ENCODE measurements at regions of chr4 and their contacts with region 1.

Region 1: DNA sequence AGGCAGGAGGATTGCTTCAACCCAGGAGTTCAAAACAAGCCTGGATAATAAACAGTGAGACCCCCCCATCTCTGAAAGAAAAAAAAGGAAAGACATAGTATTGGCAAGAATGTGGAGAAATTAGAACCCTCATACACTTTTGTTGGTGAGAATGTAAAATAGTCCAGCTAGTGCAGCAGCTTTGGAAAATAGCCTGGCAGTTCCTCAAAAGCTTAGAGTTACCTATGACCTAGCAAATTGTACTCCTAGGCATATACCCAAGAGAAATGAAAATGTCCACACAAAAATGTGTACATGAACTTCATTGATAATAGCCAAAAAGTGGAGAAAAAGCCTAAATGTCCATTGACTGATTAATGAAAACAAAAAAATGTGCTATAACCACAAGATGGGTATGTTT is 21.3 kb downstream of the THAP9 start:
- DNase-seq: no peak
- H3K4me3 ChIP-seq: no peak overlapping the region
- H3K27ac ChIP-seq: no peak overlapping the region
- H3K4me1 ChIP-seq: no peaks in the 10 kb centered on the region
- H3K27me3 ChIP-seq: no peaks in the 10 kb centered on the region
- CTCF ChIP-seq: no peak
- POLR2A ChIP-seq: no peak

Region 2: DNA sequence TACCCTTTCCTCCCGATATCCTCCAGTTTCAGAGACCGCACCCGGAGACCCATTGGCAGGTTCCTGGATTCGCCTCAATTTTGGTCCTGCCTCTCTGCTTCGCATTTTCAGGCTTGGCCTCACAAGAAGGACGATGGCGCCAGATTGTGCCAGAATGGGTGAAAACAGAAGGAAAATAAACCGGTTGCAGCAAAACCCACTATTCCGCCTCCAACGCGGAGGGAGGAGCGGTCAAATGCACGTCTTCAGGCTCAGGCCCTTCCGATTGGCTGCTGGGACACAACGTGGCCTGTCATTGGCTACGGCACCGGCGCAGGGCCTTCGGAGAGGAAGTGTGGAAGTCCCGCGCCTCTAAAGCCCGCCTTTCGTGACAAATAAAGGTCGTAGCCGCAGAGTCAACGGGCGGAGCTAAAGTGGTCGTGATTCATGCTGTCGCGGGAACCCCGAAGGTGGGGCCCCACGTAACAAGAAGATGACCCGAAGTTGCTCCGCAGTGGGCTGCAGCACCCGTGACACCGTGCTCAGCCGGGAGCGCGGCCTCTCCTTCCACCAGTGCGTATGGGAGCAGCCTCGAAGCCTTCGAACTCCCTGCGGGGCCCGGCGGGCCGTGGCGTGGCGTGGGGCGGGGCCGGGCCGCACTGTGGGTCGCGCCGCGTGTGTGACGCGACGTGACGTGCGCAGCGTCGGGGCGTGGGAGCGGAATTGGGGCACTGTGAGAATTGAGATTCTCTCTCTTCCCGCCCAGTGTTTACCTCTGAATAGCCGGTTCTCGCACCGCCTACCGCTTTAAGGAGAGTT is 21.3 kb before region 1 on chr4 and contains the start of gene THAP9:
- intact Hi-C with region 1: loop called (anchors 2 kb)
- DNase-seq: peak; percentile 99 to 100
- H3K4me3 ChIP-seq: peak within 1 kb of the TSS; percentile 60 to 76
- H3K27ac ChIP-seq: peak within 1 kb of the TSS; percentile 98
- H3K4me1 ChIP-seq: peaks cover 45% of the 10 kb centered on the region
- H3K27me3 ChIP-seq: no peaks in the 10 kb centered on the region
- CTCF ChIP-seq: no peak
- POLR2A ChIP-seq: peak; percentile 64 to 85
- total RNA-seq, gene THAP9: 4.2 TPM

Region 3: DNA sequence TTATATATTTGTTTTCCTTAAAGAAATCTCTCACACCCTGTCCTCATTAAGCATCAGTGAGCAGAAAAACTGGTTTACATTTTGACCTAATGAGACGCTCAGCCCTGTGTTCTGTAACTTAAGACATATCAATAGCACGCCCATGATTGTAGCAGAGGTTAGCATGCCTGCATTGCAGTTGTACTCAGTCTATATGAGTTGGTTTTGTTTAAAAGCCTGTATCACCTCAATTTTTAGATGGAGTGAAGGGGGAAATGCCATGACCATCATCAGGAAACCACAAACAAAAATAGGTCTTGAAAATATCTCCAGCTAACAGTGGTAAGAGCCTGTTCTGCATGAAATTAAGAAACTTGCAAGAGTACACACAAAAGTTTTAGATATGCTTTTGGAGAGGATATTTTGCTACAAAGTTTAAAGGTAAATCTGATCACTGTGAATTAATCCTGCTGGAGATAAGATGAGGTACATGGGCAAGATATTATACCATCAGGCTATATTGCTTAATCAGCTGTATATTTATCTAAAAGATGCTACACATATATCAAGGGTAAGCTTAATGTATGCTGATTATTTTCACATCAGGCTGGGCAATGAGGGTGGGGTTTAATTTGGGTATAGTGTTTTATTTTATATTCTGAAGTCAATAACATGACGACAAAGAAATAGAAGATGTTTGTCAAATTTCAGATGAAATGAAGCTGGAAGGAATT is 375.9 kb after region 1 on chr4:
- intact Hi-C with region 1: no loop called
- DNase-seq: no peak
- H3K4me3 ChIP-seq: no peak overlapping the region
- H3K27ac ChIP-seq: no peak overlapping the region
- H3K4me1 ChIP-seq: no peaks in the 10 kb centered on the region
- H3K27me3 ChIP-seq: no peaks in the 10 kb centered on the region
- CTCF ChIP-seq: no peak
- POLR2A ChIP-seq: no peak

Measured in vagina (tissue), 2 donors.